CD8-positive, alpha-beta memory T cell (primary cell): ENCODE measurements at regions of chr11 and their contacts with region 1.

Region 1: GRCh38 chr11:2930704-2931428 is 1.6 kb upstream of the PHLDA2 start:
- DNase-seq: peak in 2 of 5 donors; percentile 18 to 63
- H3K4me3 ChIP-seq: peak overlapping the region; percentile 56
- H3K4me3 Mint-ChIP-seq: peak overlapping the region; percentile 38 to 90 (median 82)
- H3K27ac ChIP-seq: peak overlapping the region; percentile 31
- H3K27ac Mint-ChIP-seq: peak overlapping the region in 5 of 8 donors; percentile 11 to 90 (median 86)
- H3K4me1 ChIP-seq: peaks cover 25% of the 10 kb centered on the region
- H3K4me1 Mint-ChIP-seq: peaks cover 20 to 41% (median 22%) of the 10 kb centered on the region in 3 donors
- H3K27me3 ChIP-seq: peaks cover 6% of the 10 kb centered on the region
- H3K27me3 Mint-ChIP-seq: peaks cover 17 to 21% of the 10 kb centered on the region in 2 donors

Region 2: DNA sequence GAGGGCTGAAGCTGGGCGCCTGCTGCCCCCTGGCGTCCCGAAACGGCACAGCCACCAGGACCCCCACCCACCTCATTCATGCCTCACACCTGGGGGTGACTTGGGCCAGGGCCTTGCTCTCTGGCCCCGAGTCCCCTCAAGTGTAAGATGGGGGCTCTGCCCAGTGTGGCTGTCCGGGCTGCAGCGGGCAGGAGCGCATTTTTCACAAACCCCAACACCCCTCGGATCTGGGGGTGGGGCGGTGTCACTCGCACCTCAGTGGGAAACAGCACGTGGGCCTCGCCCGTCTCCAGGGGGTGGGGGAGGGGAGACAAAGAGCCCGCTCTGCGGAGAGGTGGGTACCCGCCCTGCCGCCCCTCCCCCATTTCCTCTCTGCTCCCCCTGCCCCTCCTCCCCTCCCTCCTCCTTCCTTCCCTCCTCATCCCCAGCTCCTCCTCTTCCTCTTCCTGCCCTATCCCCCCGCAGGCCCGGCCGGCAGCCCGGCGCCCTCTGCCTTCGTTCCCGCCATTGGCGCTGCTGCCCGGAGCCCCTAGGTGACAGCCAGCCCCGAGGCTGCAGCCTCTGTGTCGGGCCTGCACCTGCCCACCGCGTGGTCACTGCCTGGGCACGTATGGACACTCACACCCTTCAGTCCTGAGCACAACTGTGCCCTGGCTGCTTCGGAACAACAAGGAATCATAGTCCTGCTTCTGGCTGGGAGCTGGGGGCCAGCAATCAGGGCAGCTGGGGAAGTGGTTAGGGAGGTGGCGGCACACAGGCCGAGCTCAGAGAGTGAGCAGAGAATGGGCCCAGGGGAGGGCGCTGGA is 38.4 kb before region 1 on chr11:
- CTCF ChIA-PET with region 1: interaction called, 31 read pairs
- POLR2A ChIA-PET with region 1: interaction called, 3 read pairs
- DNase-seq: peak; percentile 38 to 73 (median 46)
- H3K4me3 ChIP-seq: peak overlapping the region; percentile 63
- H3K4me3 Mint-ChIP-seq: peak overlapping the region; percentile 62 to 91 (median 75)
- H3K27ac ChIP-seq: peak overlapping the region; percentile 71
- H3K27ac Mint-ChIP-seq: peak overlapping the region; percentile 55 to 91 (median 82)
- H3K4me1 ChIP-seq: peaks cover 31% of the 10 kb centered on the region
- H3K4me1 Mint-ChIP-seq: peaks cover 20 to 34% (median 24%) of the 10 kb centered on the region in 3 donors
- H3K27me3 ChIP-seq: no peaks in the 10 kb centered on the region
- H3K27me3 Mint-ChIP-seq: no peaks in the 10 kb centered on the region

Region 3: GRCh38 chr11:2901854-2902783 is 28.7 kb before region 1 on chr11:
- CTCF ChIA-PET with region 1: interaction called, 13 read pairs
- POLR2A ChIA-PET with region 1: interaction called, 3 read pairs
- DNase-seq: peak; percentile 80 to 92 (median 91)
- H3K4me3 ChIP-seq: peak overlapping the region; percentile 71
- H3K4me3 Mint-ChIP-seq: peak overlapping the region; percentile 71 to 89 (median 78)
- H3K27ac ChIP-seq: peak overlapping the region; percentile 65
- H3K27ac Mint-ChIP-seq: peak overlapping the region; percentile 36 to 96 (median 69)
- H3K4me1 ChIP-seq: peaks cover 43% of the 10 kb centered on the region
- H3K4me1 Mint-ChIP-seq: peaks cover 41 to 59% (median 44%) of the 10 kb centered on the region in 3 donors
- H3K27me3 ChIP-seq: no peaks in the 10 kb centered on the region
- H3K27me3 Mint-ChIP-seq: peaks cover 0 to 1% of the 10 kb centered on the region in 2 donors

Region 4: DNA sequence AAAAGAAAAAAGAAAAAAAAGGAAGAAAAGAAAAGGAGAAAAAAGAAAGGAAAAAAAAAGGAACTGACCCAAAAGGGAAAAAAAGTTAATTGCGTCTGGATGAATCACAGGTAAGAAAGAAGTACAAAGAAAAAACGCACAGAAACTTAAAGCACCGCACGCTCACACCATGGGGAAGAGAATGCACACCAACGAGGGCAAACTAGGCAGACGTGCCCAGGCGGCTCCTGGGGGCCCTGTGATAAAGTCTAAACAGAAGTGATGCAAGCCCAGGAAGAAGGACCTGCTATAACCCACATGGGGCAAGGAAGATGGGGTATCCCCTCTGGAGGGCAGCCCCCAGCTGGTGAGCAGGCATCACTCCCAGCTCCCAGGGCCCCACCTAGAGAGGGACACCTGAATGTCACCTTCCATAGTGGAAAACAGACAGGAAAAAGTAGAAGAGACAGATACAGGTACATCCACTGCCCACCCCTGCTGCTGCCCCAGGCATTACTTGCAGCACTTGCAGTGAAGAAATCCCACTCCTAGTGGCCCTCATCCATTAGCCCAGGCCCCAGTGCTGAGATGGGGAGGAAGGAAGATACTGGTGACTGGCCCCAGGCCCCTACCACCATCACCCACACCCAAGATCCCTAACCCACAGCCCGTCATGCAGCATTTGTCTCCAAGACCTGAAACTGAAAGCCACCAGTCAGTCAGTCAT is 32.4 kb after region 1 on chr11:
- CTCF ChIA-PET with region 1: no interaction called
- POLR2A ChIA-PET with region 1: no interaction called
- DNase-seq: no peak
- H3K4me3 ChIP-seq: no peak overlapping the region
- H3K4me3 Mint-ChIP-seq: no peak overlapping the region
- H3K27ac ChIP-seq: no peak overlapping the region
- H3K27ac Mint-ChIP-seq: peak overlapping the region in 3 of 8 donors; percentile 26 to 63 (median 26)
- H3K4me1 ChIP-seq: no peaks in the 10 kb centered on the region
- H3K4me1 Mint-ChIP-seq: peaks cover 20 to 48% (median 47%) of the 10 kb centered on the region in 3 donors
- H3K27me3 ChIP-seq: no peaks in the 10 kb centered on the region
- H3K27me3 Mint-ChIP-seq: no peaks in the 10 kb centered on the region

Region 5: DNA sequence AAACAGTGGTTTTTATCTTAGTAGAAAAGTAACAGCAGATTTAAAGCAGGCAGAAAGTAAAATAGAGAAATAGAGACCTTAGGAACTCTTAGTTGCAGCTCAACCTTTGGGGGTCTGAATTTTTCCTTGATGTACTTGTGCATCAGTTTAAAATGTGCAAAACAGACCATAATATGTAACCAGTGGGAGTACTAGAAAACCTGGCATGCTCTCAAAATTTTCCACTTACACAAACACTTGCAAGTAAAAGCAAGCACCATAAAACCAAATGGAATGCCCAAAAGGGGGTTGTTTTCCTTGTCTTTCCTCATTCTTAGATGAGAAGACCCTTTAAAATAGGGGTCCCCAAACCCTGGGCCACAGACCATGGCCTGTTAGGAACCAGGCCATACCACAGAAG is 314.2 kb after region 1 on chr11:
- CTCF ChIA-PET with region 1: no interaction called
- POLR2A ChIA-PET with region 1: no interaction called
- DNase-seq: no peak
- H3K4me3 ChIP-seq: no peak overlapping the region
- H3K4me3 Mint-ChIP-seq: no peak overlapping the region
- H3K27ac ChIP-seq: no peak overlapping the region
- H3K27ac Mint-ChIP-seq: no peak overlapping the region
- H3K4me1 ChIP-seq: no peaks in the 10 kb centered on the region
- H3K4me1 Mint-ChIP-seq: no peaks in the 10 kb centered on the region
- H3K27me3 ChIP-seq: no peaks in the 10 kb centered on the region
- H3K27me3 Mint-ChIP-seq: peaks cover 15 to 21% of the 10 kb centered on the region in 2 donors